ENCODE measurements at regions of chr19 and their contacts with region 1.

Region 1: GRCh38 chr19:7394731-7395359 is 46.1 kb downstream of the ARHGEF18 start:
- DNase-seq: peak; percentile 88 to 93
- ATAC-seq: peak; percentile 99 to 100 (median 99)
- H3K4me3 ChIP-seq: peak overlapping the region; percentile 69 to 100 (median 98)
- H3K27ac ChIP-seq: peak overlapping the region in 9 of 10 donors; percentile 57 to 93 (median 83)
- H3K4me1 ChIP-seq: peaks cover 0 to 38% (median 20%) of the 10 kb centered on the region in 9 donors
- H3K27me3 ChIP-seq: no peaks in the 10 kb centered on the region
- CTCF ChIP-seq: peak in 3 of 9 donors; percentile 15 to 17 (median 16)

Region 2: GRCh38 chr19:7326105-7326877 is 68.6 kb before region 1 on chr19:
- intact Hi-C with region 1: no loop called
- DNase-seq: no peak
- ATAC-seq: no peak
- H3K4me3 ChIP-seq: no peak overlapping the region
- H3K27ac ChIP-seq: no peak overlapping the region
- H3K4me1 ChIP-seq: peaks cover 0 to 4% (median 4%) of the 10 kb centered on the region in 9 donors
- H3K27me3 ChIP-seq: no peaks in the 10 kb centered on the region
- CTCF ChIP-seq: peak in 4 of 9 donors; percentile 19 to 40 (median 23)

Region 3: GRCh38 chr19:7417671-7418324 is 23.0 kb after region 1 on chr19:
- intact Hi-C with region 1: no loop called
- DNase-seq: no peak
- ATAC-seq: no peak
- H3K4me3 ChIP-seq: no peak overlapping the region
- H3K27ac ChIP-seq: no peak overlapping the region
- H3K4me1 ChIP-seq: peaks cover 0 to 2% (median 0%) of the 10 kb centered on the region in 9 donors
- H3K27me3 ChIP-seq: no peaks in the 10 kb centered on the region
- CTCF ChIP-seq: no peak

Region 4: DNA sequence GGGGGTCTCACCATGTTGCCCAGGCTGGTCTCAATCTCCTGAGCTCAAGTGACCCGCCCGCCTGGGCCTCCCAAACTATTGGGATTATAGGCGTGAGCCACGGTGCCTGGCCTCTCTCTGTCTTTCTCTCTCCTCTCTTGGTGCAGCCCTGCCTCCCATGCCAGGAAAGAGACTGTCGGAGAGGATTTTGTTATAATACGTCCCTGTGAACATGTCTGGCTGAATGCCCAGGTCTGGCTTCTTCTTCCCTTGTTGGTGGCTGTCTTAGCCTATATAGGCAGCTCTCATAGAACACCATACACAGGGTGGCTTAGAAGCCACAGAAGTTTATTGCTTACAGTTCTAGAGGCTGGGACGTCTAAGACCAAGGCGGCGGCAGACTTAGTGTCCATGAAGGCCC is 47.6 kb after region 1 on chr19:
- intact Hi-C with region 1: no loop called
- DNase-seq: peak in 1 of 2 donors; percentile 36
- ATAC-seq: peak in 1 of 8 donors; percentile 31
- H3K4me3 ChIP-seq: no peak overlapping the region
- H3K27ac ChIP-seq: no peak overlapping the region
- H3K4me1 ChIP-seq: peaks cover 0 to 7% (median 0%) of the 10 kb centered on the region in 9 donors
- H3K27me3 ChIP-seq: no peaks in the 10 kb centered on the region
- CTCF ChIP-seq: no peak

Region 5: DNA sequence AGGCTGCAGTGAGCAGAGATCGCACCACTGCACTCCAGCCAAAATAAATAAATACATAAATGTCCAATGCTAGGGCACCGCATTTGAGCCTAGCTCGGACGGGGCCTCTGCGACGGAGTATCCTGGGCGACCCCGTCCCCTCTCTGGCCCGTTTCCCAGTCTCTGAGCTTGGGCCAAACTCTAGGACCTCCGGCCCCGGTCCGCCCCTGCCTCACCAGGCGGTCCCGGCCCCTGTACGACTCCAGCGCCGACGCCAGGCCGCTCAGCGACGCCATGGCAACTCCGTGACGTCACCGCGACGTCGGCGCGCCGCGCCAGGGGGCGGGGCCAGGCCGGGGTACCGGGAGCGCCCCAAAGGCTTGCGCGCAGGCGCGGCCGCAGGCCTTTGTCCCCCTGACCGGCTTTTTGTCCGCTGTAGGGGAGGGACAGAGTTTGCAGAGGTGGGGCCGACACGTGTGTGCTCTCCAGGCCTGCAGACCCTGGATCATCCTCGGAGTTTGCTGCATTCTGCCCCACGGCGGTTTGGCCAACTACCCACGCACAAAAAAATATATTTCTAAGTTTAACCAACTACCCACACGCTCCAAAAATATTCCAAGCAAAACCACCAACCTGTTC is 94.0 kb after region 1 on chr19 and contains the start of gene PEX11G:
- intact Hi-C with region 1: loop called in 1 of 10 experiments (anchors 1 kb)
- DNase-seq: peak; percentile 92 to 96
- ATAC-seq: peak; percentile 96 to 99 (median 98)
- H3K4me3 ChIP-seq: peak within 1 kb of the TSS; percentile 38 to 76 (median 64)
- H3K27ac ChIP-seq: peak within 1 kb of the TSS in 9 of 10 donors; percentile 79 to 97 (median 85)
- H3K4me1 ChIP-seq: peaks cover 0 to 45% (median 12%) of the 10 kb centered on the region in 9 donors
- H3K27me3 ChIP-seq: no peaks in the 10 kb centered on the region
- CTCF ChIP-seq: no peak
- total RNA-seq, gene PEX11G: 0.95 to 2.4 (median 1.9) TPM

Region 6: DNA sequence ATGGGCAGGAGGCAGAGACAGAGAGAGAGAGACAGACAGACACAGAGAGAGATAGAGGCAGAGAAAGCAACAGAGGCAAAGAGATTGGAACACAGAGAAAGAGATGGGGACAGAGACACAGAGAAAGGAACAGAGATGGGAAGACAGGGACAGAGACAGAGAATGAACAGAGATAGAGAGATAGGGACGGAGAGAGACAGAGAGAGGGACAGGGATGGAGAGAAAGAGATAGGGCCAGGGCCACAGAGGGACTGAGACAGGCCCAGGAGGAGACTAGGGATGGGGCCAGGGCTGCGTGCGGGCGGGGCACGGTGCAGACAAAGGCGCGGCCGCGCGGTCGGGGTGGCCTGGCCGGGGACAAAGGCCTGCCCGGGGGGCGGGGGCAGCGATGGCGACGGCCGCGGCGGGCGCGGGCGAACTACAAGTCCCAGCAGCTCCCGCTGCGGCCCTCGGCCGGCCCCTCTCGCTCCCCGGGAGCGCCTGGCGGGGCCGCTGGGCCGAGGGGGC is 120.9 kb after region 1 on chr19 and contains the start of gene ZNF358:
- intact Hi-C with region 1: loop called in 2 of 10 experiments (anchors 10 kb)
- DNase-seq: peak; percentile 70 to 87
- ATAC-seq: peak; percentile 79 to 95 (median 91)
- H3K4me3 ChIP-seq: peak within 1 kb of the TSS; percentile 63 to 90 (median 74)
- H3K27ac ChIP-seq: peak within 1 kb of the TSS; percentile 80 to 95 (median 90)
- H3K4me1 ChIP-seq: peaks cover 0 to 25% (median 10%) of the 10 kb centered on the region in 9 donors
- H3K27me3 ChIP-seq: peaks cover 0 to 19% (median 0%) of the 10 kb centered on the region in 7 donors
- CTCF ChIP-seq: no peak
- total RNA-seq, gene ZNF358: 67.7 to 104 (median 76.5) TPM

Region 7: GRCh38 chr19:7522072-7522922 is 127.5 kb after region 1 on chr19 and contains the start of gene MCOLN1:
- intact Hi-C with region 1: loop called in 2 of 10 experiments (anchors 10 kb)
- DNase-seq: peak; percentile 99 to 100
- ATAC-seq: peak; percentile 92 to 98 (median 94)
- H3K4me3 ChIP-seq: peak within 1 kb of the TSS; percentile 76 to 98 (median 82)
- H3K27ac ChIP-seq: peak within 1 kb of the TSS in 9 of 10 donors; percentile 7 to 88 (median 62)
- H3K4me1 ChIP-seq: peaks cover 7 to 28% (median 20%) of the 10 kb centered on the region in 9 donors
- H3K27me3 ChIP-seq: no peaks in the 10 kb centered on the region
- CTCF ChIP-seq: no peak
- total RNA-seq, gene MCOLN1: 10.4 to 29.1 (median 13.4) TPM

Region 8: DNA sequence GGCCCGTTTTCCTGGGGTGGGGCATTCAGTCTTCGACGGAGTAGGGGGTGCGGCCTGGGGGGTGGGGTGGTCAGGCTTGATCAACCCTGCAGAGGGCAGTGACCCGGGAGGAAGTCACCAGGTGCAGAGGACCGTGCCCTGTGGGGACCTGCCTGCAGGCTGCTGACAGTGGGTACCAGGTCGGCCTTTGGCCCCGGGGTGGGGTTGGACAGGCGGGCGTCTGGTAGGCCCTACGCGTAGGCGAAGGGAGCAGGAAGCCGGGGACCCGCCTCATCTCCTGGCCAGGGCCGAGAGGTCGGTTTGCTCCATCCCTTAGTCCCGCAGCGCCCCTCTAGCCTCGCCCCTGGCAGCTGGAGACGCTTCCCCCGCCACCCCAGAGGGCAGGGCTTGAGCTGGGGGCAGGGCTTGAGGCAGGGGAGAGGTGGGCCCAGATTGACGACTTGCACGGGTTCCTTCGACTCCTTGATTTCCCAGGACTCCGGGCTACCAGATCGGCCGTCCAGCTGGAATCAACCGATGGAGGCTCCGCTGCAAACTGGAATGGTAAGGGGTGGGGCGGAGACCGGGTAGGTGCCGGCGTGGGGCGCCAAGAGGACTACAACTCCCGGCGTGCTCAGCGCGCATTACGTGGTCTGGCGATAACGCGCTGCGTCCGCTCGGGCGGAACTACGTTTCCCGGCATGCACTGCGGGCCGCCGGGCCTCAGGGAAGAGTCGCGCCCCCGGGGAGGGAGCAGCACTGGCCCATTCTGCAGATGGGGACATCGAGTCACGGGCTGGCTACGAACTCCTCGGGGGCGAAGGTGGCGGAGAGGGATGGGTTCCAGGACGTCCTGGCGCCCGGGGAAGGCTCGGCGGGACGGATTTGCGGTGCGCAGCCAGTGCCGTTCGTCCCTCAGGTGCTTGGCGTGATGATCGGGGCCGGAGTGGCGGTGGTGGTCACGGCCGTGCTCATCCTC is 140.5 kb after region 1 on chr19 and contains the start of gene PNPLA6:
- intact Hi-C with region 1: loop called in 2 of 10 experiments (anchors 5 to 10 kb)
- DNase-seq: peak; percentile 96 to 98
- ATAC-seq: peak; percentile 83 to 92 (median 89)
- H3K4me3 ChIP-seq: peak within 1 kb of the TSS; percentile 74 to 98 (median 90)
- H3K27ac ChIP-seq: peak within 1 kb of the TSS; percentile 67 to 95 (median 91)
- H3K4me1 ChIP-seq: peaks cover 0 to 20% (median 14%) of the 10 kb centered on the region in 9 donors
- H3K27me3 ChIP-seq: no peaks in the 10 kb centered on the region
- CTCF ChIP-seq: no peak
- total RNA-seq, gene PNPLA6: 33.9 to 73.8 (median 41.6) TPM